GM10248 (cell line): ENCODE measurements at regions of chr5 and their contacts with region 1.

Region 1: GRCh38 chr5:58477760-58478376 is 13.4 kb upstream of the GAPT start:
- DNase-seq: no peak
- CTCF ChIP-seq: peak; percentile 26

Region 2: DNA sequence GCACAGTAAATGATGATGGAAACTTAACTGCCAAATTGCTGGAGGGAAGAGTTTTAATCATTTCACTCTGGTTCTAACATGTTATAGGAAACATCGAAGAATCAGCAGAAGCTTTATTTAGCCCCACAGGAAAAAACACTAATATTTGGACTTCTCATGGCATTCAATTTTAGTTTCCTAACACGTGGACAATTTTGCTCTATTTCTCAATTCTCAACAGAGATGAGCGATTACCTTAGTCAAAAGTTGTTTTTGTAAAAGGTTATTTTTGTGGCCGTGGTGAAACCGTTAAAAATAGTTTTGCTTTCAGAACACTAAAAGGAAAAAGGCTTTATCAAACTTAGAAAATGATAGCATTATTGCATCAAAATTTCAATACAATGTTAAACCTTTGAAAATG is 253.2 kb before region 1 on chr5:
- CTCF ChIA-PET with region 1: no interaction called
- POLR2A ChIA-PET with region 1: no interaction called
- DNase-seq: no peak
- CTCF ChIP-seq: no peak

Region 3: GRCh38 chr5:58450018-58450417 is 27.9 kb before region 1 on chr5:
- CTCF ChIA-PET with region 1: no interaction called
- POLR2A ChIA-PET with region 1: no interaction called
- DNase-seq: no peak
- CTCF ChIP-seq: no peak

Region 4: GRCh38 chr5:58490402-58491050 is 12.7 kb after region 1 on chr5:
- CTCF ChIA-PET with region 1: interaction called, 19 read pairs
- POLR2A ChIA-PET with region 1: no interaction called
- DNase-seq: no peak
- CTCF ChIP-seq: no peak